ENCODE measurements at regions of chr14 and their contacts with region 1.

Region 1: GRCh38 chr14:30982533-30982932 is 42.9 kb upstream of the AP4S1 start:
- DNase-seq: no peak
- ATAC-seq: no peak
- H3K4me3 ChIP-seq: no peak overlapping the region
- H3K4me3 Mint-ChIP-seq: no peak overlapping the region
- H3K27ac ChIP-seq: no peak overlapping the region
- H3K27ac Mint-ChIP-seq: no peak overlapping the region
- H3K4me1 ChIP-seq: no peaks in the 10 kb centered on the region
- H3K4me1 Mint-ChIP-seq: peaks cover 20% of the 10 kb centered on the region
- H3K27me3 ChIP-seq: no peaks in the 10 kb centered on the region
- H3K27me3 Mint-ChIP-seq: no peaks in the 10 kb centered on the region
- CTCF ChIP-seq: no peak

Region 2: DNA sequence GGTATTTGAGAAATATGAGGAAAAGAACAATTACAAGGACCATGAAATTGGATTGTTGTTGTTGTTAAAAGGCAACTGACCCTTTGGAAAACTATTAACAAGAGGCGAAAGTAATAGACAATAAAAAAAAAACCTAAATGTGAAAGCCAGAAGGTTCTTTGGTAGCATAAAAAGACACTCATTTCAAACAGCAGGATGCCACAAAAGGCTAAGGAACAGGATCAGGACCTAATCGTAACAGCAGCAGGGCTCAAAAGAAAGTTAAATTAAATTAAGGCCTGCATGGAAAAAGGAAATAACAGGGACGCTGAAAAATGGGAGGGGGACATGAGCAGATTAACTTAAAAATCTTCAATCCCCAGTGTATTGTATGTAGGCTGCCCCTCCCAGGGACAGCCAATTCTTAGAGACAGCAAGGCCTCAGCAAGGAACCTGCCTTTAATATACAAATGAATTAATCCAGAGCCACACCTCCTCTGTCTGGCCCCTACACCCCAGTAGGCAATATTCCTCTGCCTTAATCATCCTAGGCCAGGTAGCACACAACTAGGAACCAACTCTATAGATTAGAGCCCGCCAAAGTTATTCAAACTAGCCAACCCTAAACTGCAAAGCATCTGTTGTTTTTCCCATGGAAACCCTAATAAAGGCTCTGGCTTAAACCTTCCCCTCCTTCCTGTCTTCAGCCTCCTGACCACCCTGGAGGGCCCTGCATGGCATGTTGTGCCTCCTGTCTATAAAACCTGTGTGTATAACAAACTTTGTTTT is 14.5 kb after region 1 on chr14:
- CTCF ChIA-PET with region 1: interaction called, 10 read pairs
- POLR2A ChIA-PET with region 1: interaction called, 3 read pairs
- intact Hi-C with region 1: no loop called
- DNase-seq: no peak
- ATAC-seq: no peak
- H3K4me3 ChIP-seq: no peak overlapping the region
- H3K4me3 Mint-ChIP-seq: no peak overlapping the region
- H3K27ac ChIP-seq: no peak overlapping the region
- H3K27ac Mint-ChIP-seq: no peak overlapping the region
- H3K4me1 ChIP-seq: peaks cover 9% of the 10 kb centered on the region
- H3K4me1 Mint-ChIP-seq: peaks cover 50% of the 10 kb centered on the region
- H3K27me3 ChIP-seq: no peaks in the 10 kb centered on the region
- H3K27me3 Mint-ChIP-seq: no peaks in the 10 kb centered on the region
- CTCF ChIP-seq: no peak

Region 3: GRCh38 chr14:31084385-31084784 is 101.9 kb after region 1 on chr14:
- CTCF ChIA-PET with region 1: interaction called, 17 read pairs
- POLR2A ChIA-PET with region 1: no interaction called
- intact Hi-C with region 1: loop called (anchors 1 kb)
- DNase-seq: no peak
- ATAC-seq: no peak
- H3K4me3 ChIP-seq: no peak overlapping the region
- H3K4me3 Mint-ChIP-seq: no peak overlapping the region
- H3K27ac ChIP-seq: no peak overlapping the region
- H3K27ac Mint-ChIP-seq: no peak overlapping the region
- H3K4me1 ChIP-seq: no peaks in the 10 kb centered on the region
- H3K4me1 Mint-ChIP-seq: no peaks in the 10 kb centered on the region
- H3K27me3 ChIP-seq: no peaks in the 10 kb centered on the region
- H3K27me3 Mint-ChIP-seq: no peaks in the 10 kb centered on the region
- CTCF ChIP-seq: no peak

Measured in CD8-positive, alpha-beta T cell (primary cell).